Astrocyte of the cerebellum (primary cell): ENCODE measurements at regions of chr3 and their contacts with region 1.

Region 1: DNA sequence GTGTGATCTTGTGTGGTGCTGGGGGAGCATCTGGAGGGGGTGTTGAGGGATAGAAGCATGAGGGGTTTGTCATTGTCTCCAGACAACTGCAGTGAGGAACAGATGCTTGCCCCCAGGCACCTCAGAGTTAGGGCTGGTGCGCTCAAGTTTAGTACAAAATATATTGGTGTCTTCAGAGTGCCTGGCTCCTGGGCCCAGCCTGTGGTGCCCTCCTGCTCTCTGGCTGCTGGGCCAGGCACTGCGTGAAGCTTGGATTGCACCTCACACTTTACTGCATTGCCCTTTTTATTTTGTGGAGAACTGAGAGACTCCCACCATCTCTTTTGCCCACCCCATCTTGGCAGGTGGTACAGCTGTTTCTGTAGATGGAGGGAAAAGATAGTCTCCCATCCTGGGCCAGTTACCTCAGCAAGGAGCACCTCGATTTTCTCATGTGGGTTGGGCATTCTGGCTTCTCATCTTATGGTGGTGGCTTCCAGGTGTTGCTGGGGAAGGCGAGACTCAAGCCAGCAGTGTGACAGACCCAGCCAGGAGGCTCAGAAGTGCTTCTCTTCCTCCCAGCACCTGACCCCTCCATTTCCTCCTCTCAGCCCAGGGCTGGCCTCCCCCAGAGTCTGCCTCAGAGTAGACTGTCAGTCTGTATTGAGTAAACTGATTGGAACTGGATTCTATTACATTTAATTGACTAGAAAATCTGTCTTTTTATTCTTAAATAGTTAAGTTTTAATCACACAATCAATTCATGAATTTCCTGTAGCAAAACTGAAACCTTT is 140.5 kb downstream of the DNAJB8 start:
- DNase-seq: no peak
- H3K4me3 ChIP-seq: no peak overlapping the region
- CTCF ChIP-seq: no peak

Region 2: GRCh38 chr3:128236657-128237056 is 89.6 kb before region 1 on chr3:
- in situ Hi-C with region 1: loop called (anchors 5 kb)
- DNase-seq: no peak
- H3K4me3 ChIP-seq: no peak overlapping the region
- CTCF ChIP-seq: no peak

Region 3: DNA sequence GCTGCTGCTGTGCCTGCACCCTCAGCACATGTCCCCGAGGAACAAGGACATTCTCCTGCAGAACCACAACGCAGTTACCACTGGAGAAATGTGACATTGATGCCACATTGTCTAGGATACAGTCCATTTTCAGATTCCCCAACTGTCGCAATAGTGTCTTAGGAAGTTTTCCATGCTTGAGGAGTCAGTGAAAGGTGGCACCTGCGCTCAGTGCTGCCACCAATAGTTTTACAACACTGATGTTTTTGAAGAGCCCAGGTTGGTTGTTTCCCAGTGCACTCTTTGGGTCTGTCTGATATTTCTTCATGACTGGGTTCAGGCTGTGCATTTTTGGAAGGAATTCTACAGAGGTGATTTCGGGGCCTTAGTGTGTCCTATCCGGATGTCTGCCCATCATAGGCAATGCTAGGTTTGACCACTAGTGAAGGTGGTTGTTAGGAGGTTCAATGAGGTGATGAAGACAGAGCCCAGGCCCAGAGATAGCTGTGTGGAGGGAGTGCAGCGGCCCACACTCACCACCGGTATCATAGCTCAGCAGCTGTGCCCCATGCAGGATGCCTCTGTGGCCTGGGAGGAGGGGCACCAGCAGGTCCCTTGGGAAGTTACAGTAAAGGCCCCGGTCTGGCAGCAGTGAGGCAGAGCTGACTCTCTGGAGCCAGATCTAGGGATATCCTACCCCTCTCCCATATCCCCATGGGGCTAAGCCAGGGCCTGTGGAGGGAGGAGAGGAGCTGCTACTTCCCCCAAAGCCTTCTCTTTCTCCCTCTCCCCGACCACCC is 43.8 kb after region 1 on chr3:
- in situ Hi-C with region 1: no loop called
- DNase-seq: no peak
- H3K4me3 ChIP-seq: no peak overlapping the region
- CTCF ChIP-seq: peak; percentile 9